Activated CD4-positive, alpha-beta T cell treated with anti-CD3 and anti-CD28 coated beads, Interleukin-2, amount 10 ng/mL, durations not matched to agents 24 days and 14 days (primary cell): ENCODE measurements at regions of chrX and their contacts with region 1.

Region 1: GRCh38 chrX:65034668-65035445 is 58.6 kb upstream of the ZC4H2 start:
- DNase-seq: peak; percentile 93
- H3K4me3 Mint-ChIP-seq: peak within 1 kb of the TSS; percentile 91
- H3K27ac Mint-ChIP-seq: peak within 1 kb of the TSS; percentile 92
- H3K4me1 Mint-ChIP-seq: peaks cover 10% of the 10 kb centered on the region
- H3K27me3 Mint-ChIP-seq: no peaks in the 10 kb centered on the region

Region 2: DNA sequence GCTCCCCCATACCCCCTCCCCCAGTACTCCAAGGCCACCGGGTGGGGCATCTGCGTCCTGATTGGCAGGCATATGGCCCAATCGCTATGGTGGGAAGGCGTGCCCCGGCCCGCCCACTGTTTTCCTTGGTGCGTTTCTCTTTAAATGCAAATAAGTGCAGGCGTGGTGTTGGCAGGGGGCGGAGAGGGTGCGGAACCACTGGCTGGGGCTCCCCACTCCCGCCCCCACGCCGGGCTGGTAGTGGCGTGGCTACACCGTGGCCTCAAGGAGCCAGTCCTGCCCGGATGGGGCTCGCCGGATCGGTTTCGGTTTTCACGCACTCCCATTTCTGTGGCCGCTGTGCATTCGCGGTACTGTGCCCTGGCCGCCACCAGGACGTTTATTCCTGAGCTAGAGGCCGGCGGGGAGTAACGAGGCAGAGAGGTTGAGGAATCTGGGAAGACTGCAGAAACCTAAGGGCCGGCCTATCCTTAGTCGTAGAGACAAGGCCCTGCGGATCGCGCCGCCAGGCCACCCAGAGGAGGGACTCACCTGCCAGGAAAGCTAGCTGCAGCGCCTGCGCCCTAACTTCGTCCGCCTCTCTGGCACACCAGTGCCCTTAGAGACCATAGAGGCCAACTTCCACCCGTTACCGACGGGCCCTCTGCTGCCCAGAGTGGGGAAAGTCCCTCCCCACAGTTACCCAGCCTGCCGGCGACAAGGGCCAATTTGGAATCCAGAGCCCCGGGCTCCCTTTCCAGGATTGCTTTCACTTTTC is 828.9 kb before region 1 on chrX:
- intact Hi-C with region 1: loop called (anchors 10 kb)
- DNase-seq: peak; percentile 96
- H3K4me3 Mint-ChIP-seq: peak overlapping the region; percentile 89
- H3K27ac Mint-ChIP-seq: peak overlapping the region; percentile 94
- H3K4me1 Mint-ChIP-seq: peaks cover 10% of the 10 kb centered on the region
- H3K27me3 Mint-ChIP-seq: no peaks in the 10 kb centered on the region

Region 3: DNA sequence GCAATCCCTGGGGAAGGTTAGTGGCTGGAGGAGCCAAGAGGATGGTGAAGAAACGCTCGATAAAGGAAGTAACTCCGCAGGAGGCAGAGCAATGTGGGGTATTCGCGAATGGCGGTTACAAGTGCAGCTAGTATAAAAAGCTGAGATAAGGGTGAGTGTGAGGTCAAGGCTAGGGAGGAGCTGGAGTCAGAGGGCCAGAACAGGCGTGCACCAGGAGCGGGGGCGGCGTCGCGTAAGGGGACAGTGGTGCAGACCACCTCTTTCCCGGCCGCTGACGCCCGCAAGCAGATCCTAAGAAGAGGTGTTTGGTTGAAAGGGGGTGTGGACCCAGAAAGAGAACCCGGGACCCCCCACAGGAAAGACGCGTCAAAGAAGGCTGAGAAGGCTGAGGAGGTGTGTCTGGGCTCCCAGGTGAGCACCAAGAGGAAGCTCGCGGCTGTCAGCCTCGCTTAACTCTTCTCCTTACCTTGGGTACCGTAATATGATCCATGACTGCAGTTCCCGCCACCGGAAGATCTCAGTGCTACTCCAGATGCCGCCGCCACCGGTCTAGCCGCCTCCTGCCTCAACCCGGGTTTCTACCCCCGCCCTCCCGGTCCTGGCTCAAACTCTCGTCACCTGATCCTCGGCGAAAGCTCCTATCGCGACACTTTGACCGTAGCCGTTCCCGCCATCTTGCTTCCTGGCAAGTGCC is 639.8 kb before region 1 on chrX and contains the start of gene MTMR8:
- intact Hi-C with region 1: loop called (anchors 10 kb)
- DNase-seq: peak; percentile 92
- H3K4me3 Mint-ChIP-seq: peak within 1 kb of the TSS; percentile 94
- H3K27ac Mint-ChIP-seq: peak within 1 kb of the TSS; percentile 83
- H3K4me1 Mint-ChIP-seq: peaks cover 9% of the 10 kb centered on the region
- H3K27me3 Mint-ChIP-seq: no peaks in the 10 kb centered on the region
- total RNA-seq, gene MTMR8: 2.7 and 4.2 TPM in 2 replicates

Region 4: DNA sequence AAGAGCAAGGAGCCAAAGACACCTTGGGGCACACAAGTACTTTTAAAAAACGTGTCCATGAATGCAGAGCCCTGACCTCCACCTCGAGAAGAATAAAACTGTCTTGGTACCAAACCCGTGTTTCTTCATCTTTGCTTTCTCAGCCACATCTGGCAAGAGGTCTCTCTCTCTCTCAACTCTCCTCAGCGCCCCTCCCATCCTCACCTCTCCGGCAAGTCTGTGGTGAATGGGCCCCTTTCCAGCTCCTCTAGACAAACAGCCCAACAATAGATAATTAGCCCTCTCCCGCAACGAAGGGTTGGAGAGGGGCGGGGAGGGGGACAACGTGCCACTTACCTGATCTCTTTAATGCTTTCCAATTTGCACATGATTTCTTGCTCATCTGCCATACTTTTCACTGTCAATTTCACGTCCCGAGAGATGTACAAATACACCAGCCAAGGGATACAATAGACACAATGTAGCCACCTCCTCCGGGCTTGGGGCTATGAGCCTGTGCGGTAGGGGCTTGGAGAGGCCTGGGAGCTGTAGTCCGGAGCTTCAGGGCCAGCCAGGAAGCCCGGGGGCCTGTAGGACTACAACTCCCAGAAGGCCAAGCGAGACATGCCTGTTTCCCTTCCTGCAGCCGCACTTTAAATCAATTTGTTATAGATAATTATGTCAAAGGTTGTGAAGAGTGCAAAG is 58.7 kb before region 1 on chrX and contains the start of gene ZC4H2:
- intact Hi-C with region 1: loop called (anchors 1 kb)
- DNase-seq: peak; percentile 89
- H3K4me3 Mint-ChIP-seq: peak within 1 kb of the TSS; percentile 89
- H3K27ac Mint-ChIP-seq: peak within 1 kb of the TSS; percentile 79
- H3K4me1 Mint-ChIP-seq: peaks cover 13% of the 10 kb centered on the region
- H3K27me3 Mint-ChIP-seq: no peaks in the 10 kb centered on the region
- total RNA-seq, gene ZC4H2: 8.9 and 11.3 TPM in 2 replicates

Region 5: GRCh38 chrX:65534450-65535292 is 499.8 kb after region 1 on chrX and contains the start of gene LAS1L:
- intact Hi-C with region 1: loop called (anchors 2 kb)
- DNase-seq: peak; percentile 96
- H3K4me3 Mint-ChIP-seq: peak within 1 kb of the TSS; percentile 99
- H3K27ac Mint-ChIP-seq: peak within 1 kb of the TSS; percentile 100
- H3K4me1 Mint-ChIP-seq: peaks cover 11% of the 10 kb centered on the region
- H3K27me3 Mint-ChIP-seq: no peaks in the 10 kb centered on the region
- total RNA-seq, gene LAS1L: 61.0 and 64.0 TPM in 2 replicates